Activated naive CD4-positive, alpha-beta T cell treated with anti-CD3 and anti-CD28 coated beads for 36 hours (primary cell): ENCODE measurements at regions of chr19 and their contacts with region 1.

Region 1: DNA sequence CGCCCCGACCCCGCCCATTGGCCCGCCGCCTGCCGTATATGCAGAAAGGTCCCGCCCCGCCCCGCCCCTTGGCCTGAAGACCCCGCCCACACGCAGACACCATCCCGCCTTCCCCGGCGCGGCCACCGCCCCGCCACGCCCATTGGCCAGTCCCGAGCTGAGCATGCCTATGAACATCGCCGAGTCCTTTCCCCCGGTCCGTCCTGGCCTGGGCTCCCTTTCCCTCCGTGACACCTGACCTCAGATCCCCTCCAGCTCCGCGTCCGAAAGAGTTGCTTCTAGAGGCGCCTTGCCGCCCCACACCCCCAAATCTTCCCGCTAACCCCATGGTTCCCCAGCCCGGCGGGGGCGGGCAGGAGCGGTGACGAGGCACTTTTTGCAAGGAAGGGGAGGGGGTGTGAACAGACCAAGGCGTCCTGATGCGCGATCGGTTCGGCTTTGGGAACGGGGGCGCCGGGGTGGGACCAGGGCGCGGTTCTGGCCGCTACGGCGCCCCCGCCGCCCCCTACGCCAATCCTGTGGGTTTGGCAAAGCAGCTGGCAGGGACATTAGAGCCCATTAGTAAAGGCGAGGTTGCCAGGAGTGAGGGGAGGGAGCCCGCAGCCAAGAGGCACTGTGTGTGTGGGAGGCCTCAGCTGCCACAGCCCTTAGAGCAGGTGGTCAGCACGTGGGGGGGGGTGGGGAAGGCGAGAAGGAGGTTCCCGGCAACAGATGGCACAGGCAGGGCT is 406 bp upstream of the NUMBL start:
- DNase-seq: peak; percentile 93
- H3K4me3 Mint-ChIP-seq: peak overlapping the region; percentile 87
- H3K27ac Mint-ChIP-seq: peak overlapping the region; percentile 95
- H3K4me1 Mint-ChIP-seq: peaks cover 7% of the 10 kb centered on the region
- H3K27me3 Mint-ChIP-seq: no peaks in the 10 kb centered on the region

Region 2: GRCh38 chr19:40798223-40798996 is 107.6 kb after region 1 on chr19:
- CTCF ChIA-PET with region 1: no interaction called
- intact Hi-C with region 1: loop called (anchors 1 kb)
- DNase-seq: peak; percentile 100
- H3K4me3 Mint-ChIP-seq: peak overlapping the region; percentile 92
- H3K27ac Mint-ChIP-seq: peak overlapping the region; percentile 97
- H3K4me1 Mint-ChIP-seq: peaks cover 49% of the 10 kb centered on the region
- H3K27me3 Mint-ChIP-seq: no peaks in the 10 kb centered on the region